ENCODE measurements at regions of chr17 and their contacts with region 1.

Region 1: DNA sequence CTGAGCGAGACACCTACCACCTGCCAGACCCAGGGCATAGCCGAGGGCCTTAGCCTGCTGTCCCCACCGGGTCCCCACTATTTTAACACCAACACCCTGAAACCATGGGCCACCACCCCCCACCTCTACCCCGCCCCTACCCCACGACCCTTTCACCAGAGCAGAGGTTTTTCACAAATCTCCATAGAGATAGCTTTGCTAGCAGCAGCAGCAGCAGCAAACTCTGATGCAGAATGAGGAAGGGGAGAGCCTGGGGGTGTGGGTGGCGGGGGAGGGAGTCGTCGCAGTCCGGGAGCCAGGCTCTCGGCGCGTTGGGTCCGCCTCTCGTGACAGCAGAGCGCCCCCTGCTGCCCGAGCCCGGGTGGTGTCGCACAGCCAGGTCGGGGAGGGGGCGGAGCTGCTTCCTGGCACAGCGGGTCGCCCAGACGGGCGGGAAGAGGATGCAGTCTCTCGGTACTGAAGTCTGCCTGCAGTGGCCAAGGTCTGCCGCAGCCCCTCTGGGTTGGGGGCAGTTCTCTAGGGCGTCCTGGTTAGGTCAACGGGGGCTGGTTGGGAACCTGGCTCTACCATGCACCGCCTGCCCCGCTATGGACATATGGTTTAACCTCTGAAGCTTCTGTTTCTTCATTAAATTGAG is 38.1 kb upstream of the CCDC182 start:
- DNase-seq: peak; percentile 88
- H3K4me3 Mint-ChIP-seq: no peak overlapping the region
- H3K27ac Mint-ChIP-seq: no peak overlapping the region
- H3K4me1 Mint-ChIP-seq: no peaks in the 10 kb centered on the region
- H3K27me3 Mint-ChIP-seq: peaks cover 11% of the 10 kb centered on the region

Region 2: GRCh38 chr17:57130761-57131461 is 652.3 kb before region 1 on chr17:
- CTCF ChIA-PET with region 1: interaction called, 3 read pairs
- intact Hi-C with region 1: loop called (anchors 1 kb)
- DNase-seq: peak; percentile 91
- H3K4me3 Mint-ChIP-seq: no peak overlapping the region
- H3K27ac Mint-ChIP-seq: no peak overlapping the region
- H3K4me1 Mint-ChIP-seq: peaks cover 8% of the 10 kb centered on the region
- H3K27me3 Mint-ChIP-seq: no peaks in the 10 kb centered on the region

Region 3: GRCh38 chr17:57597531-57598453 is 185.4 kb before region 1 on chr17:
- CTCF ChIA-PET with region 1: interaction called, 3 read pairs
- intact Hi-C with region 1: loop called (anchors 2 kb)
- DNase-seq: peak; percentile 72
- H3K4me3 Mint-ChIP-seq: no peak overlapping the region
- H3K27ac Mint-ChIP-seq: peak overlapping the region; percentile 96
- H3K4me1 Mint-ChIP-seq: peaks cover 51% of the 10 kb centered on the region
- H3K27me3 Mint-ChIP-seq: no peaks in the 10 kb centered on the region

Region 4: GRCh38 chr17:57766318-57766943 is 16.8 kb before region 1 on chr17:
- CTCF ChIA-PET with region 1: interaction called, 28 read pairs
- intact Hi-C with region 1: no loop called
- DNase-seq: no peak
- H3K4me3 Mint-ChIP-seq: no peak overlapping the region
- H3K27ac Mint-ChIP-seq: no peak overlapping the region
- H3K4me1 Mint-ChIP-seq: no peaks in the 10 kb centered on the region
- H3K27me3 Mint-ChIP-seq: peaks cover 5% of the 10 kb centered on the region

Region 5: GRCh38 chr17:57772774-57773173 is 10.4 kb before region 1 on chr17:
- CTCF ChIA-PET with region 1: interaction called, 28 read pairs
- intact Hi-C with region 1: no loop called
- DNase-seq: no peak
- H3K4me3 Mint-ChIP-seq: no peak overlapping the region
- H3K27ac Mint-ChIP-seq: no peak overlapping the region
- H3K4me1 Mint-ChIP-seq: no peaks in the 10 kb centered on the region
- H3K27me3 Mint-ChIP-seq: peaks cover 24% of the 10 kb centered on the region

Region 6: DNA sequence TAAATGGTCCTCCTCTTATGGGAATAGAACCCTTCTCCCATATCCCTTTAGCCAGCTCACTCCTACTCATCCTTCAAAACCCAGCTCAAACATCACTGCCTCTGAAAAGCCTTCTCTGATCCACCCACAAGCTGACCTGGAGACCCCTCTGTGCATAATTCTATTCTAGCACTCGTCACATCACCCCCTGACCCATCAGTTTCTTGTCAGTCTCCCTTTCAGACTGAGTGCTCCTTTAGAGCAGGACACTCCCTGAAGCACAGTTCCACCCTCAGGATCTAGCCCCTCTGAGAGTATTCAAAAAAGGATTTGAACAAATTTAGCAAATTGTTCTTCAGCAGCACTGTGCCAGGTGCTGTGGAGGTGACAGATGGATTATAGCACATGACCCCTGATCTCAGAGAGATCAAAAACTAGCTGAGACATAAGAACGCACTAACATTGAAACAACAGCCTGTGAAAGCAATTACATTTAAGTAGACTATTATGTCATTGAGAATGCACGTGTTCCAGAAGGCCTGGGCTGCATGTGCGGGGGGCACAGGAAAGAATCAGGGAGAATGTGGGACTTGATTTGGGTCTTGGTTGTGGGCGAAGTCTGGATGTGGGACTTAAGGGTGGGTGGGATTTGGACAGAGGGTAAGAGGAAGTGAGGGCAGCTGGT is 23.1 kb after region 1 on chr17:
- CTCF ChIA-PET with region 1: interaction called, 11 read pairs
- intact Hi-C with region 1: no loop called
- DNase-seq: no peak
- H3K4me3 Mint-ChIP-seq: no peak overlapping the region
- H3K27ac Mint-ChIP-seq: no peak overlapping the region
- H3K4me1 Mint-ChIP-seq: peaks cover 10% of the 10 kb centered on the region
- H3K27me3 Mint-ChIP-seq: peaks cover 27% of the 10 kb centered on the region

Region 7: DNA sequence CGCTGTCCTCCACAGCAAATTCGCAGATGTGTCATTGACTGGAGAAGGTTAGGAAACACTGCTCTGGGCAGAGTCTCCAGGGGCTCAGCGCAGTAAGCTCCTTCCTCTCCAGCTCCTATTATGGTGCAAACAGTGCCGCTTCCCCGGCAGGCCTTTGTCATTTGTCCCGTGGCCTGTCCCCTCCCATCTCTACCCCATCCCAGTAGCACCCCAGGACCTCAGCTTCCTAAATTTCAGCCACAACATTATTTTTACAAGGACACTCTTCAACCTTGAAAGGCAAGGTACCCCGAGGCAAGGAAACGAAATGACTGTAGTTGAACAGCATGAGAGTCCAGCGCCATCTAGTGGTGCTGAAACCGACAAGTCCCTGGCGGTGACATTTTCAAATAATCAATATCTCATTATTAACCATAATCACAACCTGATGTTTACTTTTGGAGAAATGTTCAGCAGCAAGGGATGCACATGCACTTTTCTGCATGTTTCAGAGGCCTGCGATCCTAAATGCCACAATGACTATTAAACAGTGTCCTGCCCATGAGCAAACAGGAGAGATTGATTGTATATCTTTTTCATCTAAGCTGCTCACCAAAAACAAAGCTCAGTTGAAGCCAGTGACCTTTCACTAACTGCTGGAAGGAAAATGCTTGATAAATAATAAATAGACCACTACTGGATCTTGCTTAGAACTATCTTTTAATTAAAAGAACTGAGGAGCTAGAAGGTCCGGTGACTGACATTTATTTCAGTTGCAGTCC is 50.1 kb after region 1 on chr17:
- CTCF ChIA-PET with region 1: interaction called, 19 read pairs
- intact Hi-C with region 1: loop called (anchors 1 kb)
- DNase-seq: peak; percentile 83
- H3K4me3 Mint-ChIP-seq: no peak overlapping the region
- H3K27ac Mint-ChIP-seq: no peak overlapping the region
- H3K4me1 Mint-ChIP-seq: peaks cover 4% of the 10 kb centered on the region
- H3K27me3 Mint-ChIP-seq: no peaks in the 10 kb centered on the region

Measured in activated naive CD4-positive, alpha-beta T cell treated with anti-CD3 and anti-CD28 coated beads for 36 hours (primary cell).